AG04449 (cell line): ENCODE measurements at regions of chr2 and their contacts with region 1.

Region 1: GRCh38 chr2:172131713-172132555 is 29.2 kb upstream of the DLX2 start:
- DNase-seq: no peak
- H3K4me3 ChIP-seq: no peak overlapping the region
- CTCF ChIP-seq: no peak

Region 2: DNA sequence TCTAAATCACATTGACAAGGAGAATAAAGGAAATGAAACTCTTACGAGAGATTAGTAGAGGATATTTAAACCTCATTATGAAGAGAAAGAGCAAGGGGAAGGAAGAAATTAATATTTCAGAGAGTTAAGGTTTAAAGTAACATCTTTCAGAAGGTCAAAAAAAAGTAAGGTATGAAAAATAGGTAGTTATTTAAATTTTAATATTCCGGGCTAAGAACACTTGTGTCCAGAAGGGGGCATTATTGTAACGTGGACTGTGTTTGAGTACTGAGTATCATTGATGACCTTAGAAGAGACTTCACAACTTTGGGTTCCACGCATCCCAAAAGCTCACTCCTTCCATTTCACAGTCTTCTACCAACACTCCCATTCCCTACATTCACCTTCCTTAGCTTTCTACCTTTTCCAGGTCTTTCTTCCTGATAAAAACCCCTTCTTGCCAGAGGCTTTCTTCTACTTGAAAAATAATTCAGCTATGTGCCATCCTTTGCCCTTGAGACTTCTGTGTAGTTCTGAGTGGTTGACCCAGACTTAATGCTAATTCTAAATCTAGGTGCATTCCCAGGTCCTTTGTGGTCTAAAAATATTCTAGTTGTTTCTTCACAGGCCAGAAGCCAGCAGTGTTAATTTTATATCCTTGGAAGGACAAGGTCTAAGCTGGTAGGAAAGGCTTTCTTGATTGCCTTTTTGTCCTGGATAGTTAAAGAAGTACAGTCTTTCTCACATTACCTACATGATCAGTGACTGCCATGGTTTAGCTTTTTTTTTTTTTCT is 428.2 kb before region 1 on chr2:
- CTCF ChIA-PET with region 1: interaction called, 23 read pairs
- POLR2A ChIA-PET with region 1: interaction called, 3 read pairs
- DNase-seq: no peak
- H3K4me3 ChIP-seq: no peak overlapping the region
- CTCF ChIP-seq: peak; percentile 28

Region 3: DNA sequence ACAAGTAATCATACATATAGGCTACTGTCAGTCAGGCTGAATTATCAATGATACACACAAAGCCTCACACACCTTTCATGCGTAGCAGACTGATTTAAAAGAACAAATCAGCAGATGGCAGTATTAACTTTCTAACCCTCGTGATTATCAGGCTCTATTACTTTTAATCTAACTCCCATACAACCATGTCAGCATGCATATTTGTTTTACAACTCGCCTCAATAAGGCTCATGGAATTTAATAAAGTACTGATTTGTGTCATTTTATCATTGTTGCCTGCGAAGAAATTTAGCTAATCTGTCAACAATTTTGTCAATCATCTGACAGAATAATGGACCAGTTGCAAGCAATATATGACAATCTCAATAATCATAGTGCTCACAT is 320.7 kb before region 1 on chr2:
- CTCF ChIA-PET with region 1: interaction called, 26 read pairs
- POLR2A ChIA-PET with region 1: no interaction called
- DNase-seq: no peak
- H3K4me3 ChIP-seq: no peak overlapping the region
- CTCF ChIP-seq: peak; percentile 21

Region 4: DNA sequence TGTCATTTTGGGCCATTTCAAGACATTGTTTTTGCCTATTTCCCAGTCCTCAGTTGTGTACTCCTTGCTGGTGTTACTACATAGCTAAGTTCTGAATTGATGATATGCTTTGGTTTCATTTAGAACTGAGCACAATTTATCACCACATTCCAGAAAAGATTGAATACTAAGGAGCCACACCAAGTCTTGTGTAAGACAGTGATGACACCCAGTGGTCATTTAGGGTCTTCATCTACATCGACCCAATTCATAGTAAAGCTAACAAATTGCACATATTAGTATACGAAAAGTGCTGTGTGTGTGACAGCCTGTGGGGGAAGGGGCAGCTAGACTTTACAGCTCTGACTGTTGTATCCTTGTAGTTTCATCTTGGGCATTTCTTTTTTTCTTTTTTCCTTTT is 18.3 kb before region 1 on chr2:
- CTCF ChIA-PET with region 1: interaction called, 28 read pairs
- POLR2A ChIA-PET with region 1: no interaction called
- DNase-seq: no peak
- H3K4me3 ChIP-seq: no peak overlapping the region
- CTCF ChIP-seq: peak; percentile 29

Region 5: GRCh38 chr2:172147944-172148650 is 16.2 kb after region 1 on chr2:
- CTCF ChIA-PET with region 1: interaction called, 13 read pairs
- POLR2A ChIA-PET with region 1: no interaction called
- DNase-seq: no peak
- H3K4me3 ChIP-seq: peak overlapping the region; percentile 20; the same call in 1 of the 2 replicates
- CTCF ChIP-seq: no peak

Region 6: DNA sequence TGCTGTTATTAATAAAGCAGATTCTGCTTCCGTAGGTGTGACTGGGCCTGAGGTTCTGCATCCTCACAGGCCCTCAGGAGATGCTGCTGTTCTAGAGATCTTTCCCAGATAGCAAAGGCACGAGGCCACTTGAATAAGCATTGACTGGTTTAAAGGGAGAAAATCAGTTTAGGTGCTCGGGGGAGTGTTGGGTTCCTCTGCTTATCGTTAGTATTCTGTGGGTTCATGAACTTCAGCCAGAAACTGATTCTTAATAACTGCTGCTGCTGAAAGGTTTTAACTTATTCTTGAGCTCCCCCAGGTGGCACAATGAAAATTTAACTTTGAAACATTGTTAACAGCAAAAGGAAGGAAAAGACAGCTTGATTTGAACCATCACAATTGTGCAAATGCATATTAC is 352.3 kb after region 1 on chr2:
- CTCF ChIA-PET with region 1: interaction called, 11 read pairs
- POLR2A ChIA-PET with region 1: no interaction called
- DNase-seq: no peak
- H3K4me3 ChIP-seq: no peak overlapping the region
- CTCF ChIP-seq: no peak